Activated naive CD8-positive, alpha-beta T cell treated with anti-CD3 and anti-CD28 coated beads, Interleukin-2, amount 10 ng/mL, durations not matched to agents 7 days and 5 days (primary cell): ENCODE measurements at regions of chr7 and their contacts with region 1.

Region 1: DNA sequence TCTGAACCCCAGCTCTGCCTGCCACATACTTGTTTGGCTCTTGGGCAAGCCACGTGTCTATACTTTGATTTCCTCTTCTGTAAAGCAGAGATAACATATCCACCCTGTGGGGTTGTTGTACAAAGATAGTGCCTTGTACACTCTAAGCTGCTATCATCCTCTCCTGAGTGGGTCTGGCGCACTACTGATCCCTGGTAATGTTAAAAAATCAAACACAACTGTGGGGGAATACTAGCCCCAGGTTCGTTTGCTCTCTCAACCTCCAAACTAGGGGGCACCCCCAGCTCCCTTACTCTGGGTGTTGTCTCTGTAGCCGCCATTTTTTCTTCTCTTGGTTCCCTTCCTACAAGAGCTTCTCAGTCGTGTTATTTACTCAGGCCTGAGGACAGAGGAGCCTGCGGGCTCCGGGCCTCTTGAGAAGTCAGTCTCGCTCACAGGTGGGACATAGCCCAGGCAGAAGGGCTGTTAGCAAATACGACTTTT is 1.0 kb downstream of the POLM start:
- DNase-seq: peak; percentile 53
- ATAC-seq: no peak
- H3K4me3 Mint-ChIP-seq: peak overlapping the region; percentile 92
- H3K27ac Mint-ChIP-seq: peak overlapping the region; percentile 93
- H3K4me1 Mint-ChIP-seq: peaks cover 32% of the 10 kb centered on the region
- H3K27me3 Mint-ChIP-seq: no peaks in the 10 kb centered on the region

Region 2: DNA sequence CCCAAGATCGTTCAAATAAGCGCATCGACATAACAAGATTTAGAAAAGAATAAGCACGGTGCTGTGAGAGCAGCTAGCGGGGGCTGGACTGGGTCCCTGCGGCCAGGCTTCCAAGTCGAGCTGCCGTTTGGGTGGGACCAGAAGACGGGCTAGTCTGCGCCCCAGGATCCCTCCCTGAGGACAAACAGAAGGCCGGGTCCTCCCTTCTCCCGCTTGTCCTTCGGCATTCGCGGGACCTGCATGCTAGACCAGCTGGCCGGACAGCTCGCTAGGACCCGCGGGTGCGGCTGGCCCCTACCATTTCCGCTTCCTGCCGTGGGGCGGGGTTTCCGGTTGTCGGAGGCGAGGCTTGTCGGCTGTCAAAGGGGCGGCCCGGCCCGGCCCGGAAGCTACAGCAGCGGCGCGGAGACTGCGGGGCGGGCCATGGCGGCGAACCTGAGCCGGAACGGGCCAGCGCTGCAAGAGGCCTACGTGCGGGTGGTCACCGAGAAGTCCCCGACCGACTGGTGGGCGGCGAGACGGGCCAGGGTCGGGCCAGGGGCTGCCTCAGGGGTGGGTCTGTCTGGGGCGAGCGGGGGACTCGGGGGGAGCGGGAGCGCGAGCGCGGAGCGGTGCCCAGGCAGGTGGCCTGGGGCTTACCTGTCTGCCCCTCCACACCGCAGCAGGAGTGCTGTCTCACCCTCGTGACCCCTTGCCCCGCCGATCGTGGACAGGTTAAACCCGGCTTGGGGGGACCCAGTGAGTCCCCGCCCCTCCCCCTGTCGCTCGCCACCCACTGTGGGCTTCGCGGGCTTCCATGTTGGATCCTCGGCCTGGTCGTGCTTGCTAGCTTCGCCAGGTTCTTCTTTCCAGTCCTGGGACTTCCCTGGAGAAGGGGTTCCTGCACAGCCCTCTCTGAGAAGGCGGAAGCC is 36.7 kb before region 1 on chr7 and contains the start of gene DBNL:
- POLR2A ChIA-PET with region 1: interaction called, 10 read pairs
- DNase-seq: peak; percentile 95
- ATAC-seq: peak; percentile 65
- H3K4me3 Mint-ChIP-seq: peak within 1 kb of the TSS; percentile 84
- H3K27ac Mint-ChIP-seq: peak within 1 kb of the TSS; percentile 95
- H3K4me1 Mint-ChIP-seq: peaks cover 38% of the 10 kb centered on the region
- H3K27me3 Mint-ChIP-seq: no peaks in the 10 kb centered on the region
- total RNA-seq, gene DBNL: 152 to 157 TPM

Region 3: DNA sequence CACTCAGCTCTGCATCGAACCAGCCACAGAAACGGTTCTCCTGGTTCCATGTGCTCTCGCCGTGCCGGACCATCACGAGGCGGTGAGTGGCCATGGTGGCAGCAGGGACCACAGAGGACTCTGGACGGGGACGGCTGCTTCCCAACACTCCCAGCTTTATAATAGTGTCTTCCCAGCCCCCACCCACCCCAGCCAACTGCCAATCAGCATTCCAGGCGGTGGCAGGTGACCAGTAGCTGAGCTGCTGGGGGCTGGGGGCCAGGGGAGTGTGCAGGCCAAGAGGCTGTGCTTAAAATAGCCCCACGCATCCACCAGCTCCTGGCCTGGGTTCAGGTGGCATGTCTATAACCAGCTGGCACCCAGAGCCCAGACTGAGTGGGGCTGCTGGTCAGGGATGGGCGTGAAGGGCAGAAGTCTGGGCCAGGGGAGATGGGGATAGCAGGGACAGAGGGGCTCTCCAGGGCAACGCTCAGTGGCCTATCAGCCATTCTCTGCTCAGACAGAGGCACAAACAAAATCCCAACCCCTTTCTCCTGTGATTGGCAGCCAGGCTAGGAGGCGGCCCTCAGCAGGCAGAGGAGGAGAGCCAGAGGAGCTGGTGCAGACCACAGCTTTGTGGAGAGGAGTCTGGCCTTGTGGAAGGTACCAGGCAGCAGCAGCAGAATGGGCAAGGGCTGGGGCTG is 15.7 kb before region 1 on chr7 and contains the start of gene PGAM2:
- POLR2A ChIA-PET with region 1: interaction called, 11 read pairs
- DNase-seq: peak; percentile 36
- ATAC-seq: peak; percentile 44
- H3K4me3 Mint-ChIP-seq: no peak within 1 kb of the TSS
- H3K27ac Mint-ChIP-seq: no peak within 1 kb of the TSS
- H3K4me1 Mint-ChIP-seq: peaks cover 7% of the 10 kb centered on the region
- H3K27me3 Mint-ChIP-seq: no peaks in the 10 kb centered on the region
- total RNA-seq, gene PGAM2: 0.74 to 2.1 TPM

Region 4: GRCh38 chr7:44103923-44104859 is 22.9 kb after region 1 on chr7 and contains the start of gene AEBP1:
- POLR2A ChIA-PET with region 1: interaction called, 10 read pairs
- DNase-seq: peak; percentile 64
- ATAC-seq: peak; percentile 73
- H3K4me3 Mint-ChIP-seq: peak within 1 kb of the TSS; percentile 83
- H3K27ac Mint-ChIP-seq: peak within 1 kb of the TSS; percentile 65
- H3K4me1 Mint-ChIP-seq: peaks cover 16% of the 10 kb centered on the region
- H3K27me3 Mint-ChIP-seq: peaks cover 4% of the 10 kb centered on the region
- total RNA-seq, gene AEBP1: 21.5 to 22.0 TPM

Region 5: DNA sequence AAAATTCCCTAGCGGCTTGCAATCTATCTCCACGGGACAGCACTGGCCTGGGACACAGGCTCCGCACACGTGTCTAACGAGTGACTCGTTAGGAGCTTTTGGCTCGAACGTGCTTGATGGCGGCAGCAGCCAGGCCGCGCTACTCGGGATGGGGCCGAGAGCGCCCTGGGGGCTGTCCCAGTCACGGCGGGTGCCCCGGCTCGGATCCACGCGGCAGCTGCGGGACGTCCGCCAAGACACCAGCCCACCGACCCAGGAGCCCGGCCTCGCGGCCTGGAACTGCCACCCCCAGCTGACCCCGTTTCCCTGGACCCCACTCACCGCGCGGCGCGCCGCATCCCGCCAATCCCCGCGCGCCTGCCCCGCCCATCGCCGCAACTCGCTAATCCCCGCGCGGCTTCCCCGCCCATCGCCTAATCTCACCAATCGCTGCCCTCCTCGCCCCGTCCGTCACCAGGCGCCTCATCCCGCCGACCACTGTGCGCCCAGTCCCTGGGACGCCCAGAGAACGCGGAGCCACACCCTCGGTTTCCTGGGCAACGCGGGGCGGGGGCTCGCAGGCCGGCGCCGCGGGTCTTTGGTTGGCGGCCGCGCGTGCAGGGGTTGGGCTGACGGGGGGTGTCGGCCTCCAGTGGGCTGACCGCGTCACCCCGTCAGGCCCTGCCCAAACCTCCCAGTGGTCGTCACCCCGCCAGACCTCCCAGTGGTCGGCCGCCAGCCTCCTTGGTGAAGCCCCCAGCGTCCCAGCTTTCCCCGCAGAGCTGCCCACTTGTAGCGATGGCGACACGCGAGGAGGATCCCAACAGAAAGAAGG is 42.1 kb after region 1 on chr7 and contains the start of gene POLD2:
- POLR2A ChIA-PET with region 1: interaction called, 20 read pairs
- DNase-seq: peak; percentile 97
- ATAC-seq: peak; percentile 100
- H3K4me3 Mint-ChIP-seq: peak within 1 kb of the TSS; percentile 77
- H3K27ac Mint-ChIP-seq: peak within 1 kb of the TSS; percentile 83
- H3K4me1 Mint-ChIP-seq: peaks cover 28% of the 10 kb centered on the region
- H3K27me3 Mint-ChIP-seq: peaks cover 17% of the 10 kb centered on the region
- total RNA-seq, gene POLD2: 99.3 to 99.4 TPM

Region 6: DNA sequence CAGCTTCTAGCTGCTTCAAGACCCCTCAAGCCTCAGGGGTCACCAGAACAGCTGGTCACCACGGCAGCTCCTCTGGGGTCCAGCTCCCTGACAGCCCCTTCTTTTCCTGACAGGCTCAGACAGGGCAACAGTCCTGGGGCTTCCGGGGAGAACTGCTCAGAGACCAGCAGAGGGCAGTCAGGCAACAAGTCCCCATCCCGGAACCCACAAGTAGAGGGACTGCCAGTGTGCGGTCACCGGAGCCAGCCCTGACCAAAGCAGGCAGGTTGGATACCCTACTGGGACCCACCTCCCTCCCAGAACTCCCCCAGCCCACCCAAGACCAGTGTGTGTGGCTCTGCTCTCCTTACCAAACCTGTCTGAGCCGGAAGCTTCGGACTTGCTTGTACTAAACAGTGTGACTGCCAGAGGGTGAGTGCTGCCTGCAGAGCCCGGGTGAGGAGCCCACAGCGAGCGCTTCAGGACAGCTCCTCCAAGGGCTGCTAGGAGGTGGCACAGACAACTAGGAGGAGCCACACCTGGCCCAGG is 159.7 kb after region 1 on chr7:
- POLR2A ChIA-PET with region 1: no interaction called
- DNase-seq: peak; percentile 72
- ATAC-seq: peak; percentile 87
- H3K4me3 Mint-ChIP-seq: peak overlapping the region; percentile 28
- H3K27ac Mint-ChIP-seq: peak overlapping the region; percentile 85
- H3K4me1 Mint-ChIP-seq: peaks cover 2% of the 10 kb centered on the region
- H3K27me3 Mint-ChIP-seq: no peaks in the 10 kb centered on the region